ENCODE measurements at regions of chr20 and their contacts with region 1.

Region 1: DNA sequence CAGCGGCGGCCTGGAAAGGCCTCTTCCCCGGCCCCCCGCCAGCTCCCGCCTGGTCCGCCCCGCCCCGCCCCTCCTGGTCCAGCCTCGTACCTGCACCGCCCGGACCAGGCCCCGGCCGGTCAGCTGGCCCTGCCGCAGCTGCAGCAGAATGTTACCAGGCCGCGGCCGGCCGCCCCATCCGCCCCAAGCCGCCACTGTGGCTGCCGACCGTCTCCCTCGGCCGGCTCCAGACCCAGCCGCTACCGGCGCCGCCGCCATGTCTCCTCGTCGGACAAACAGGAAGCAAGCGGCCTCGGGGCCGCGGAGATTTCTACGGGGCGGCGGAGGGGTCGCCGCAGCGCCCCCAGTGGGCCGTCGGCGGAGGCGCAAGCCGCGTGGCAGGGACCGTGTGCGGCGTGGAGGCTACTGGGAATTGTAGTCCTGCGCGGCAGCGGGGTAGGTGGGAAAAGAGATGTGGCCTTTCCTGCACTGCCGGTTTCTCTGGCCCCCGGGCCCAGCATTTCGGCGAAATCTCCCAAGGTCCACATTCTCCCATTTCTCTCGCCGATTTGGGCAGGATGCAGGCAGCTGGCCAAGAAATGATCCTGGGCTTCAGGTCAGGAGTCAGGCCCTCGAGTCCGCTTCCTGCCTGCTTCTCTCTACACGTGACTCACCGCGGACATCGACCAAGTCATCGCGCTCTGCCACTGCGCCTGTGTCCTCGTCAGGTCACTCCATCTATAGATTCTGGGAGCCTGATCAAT is at the start of gene TRPC4AP:
- DNase-seq: peak; percentile 88
- ATAC-seq: peak; percentile 90
- H3K4me3 Mint-ChIP-seq: peak within 1 kb of the TSS; percentile 89
- H3K27ac Mint-ChIP-seq: peak within 1 kb of the TSS; percentile 97
- H3K4me1 Mint-ChIP-seq: peaks cover 31% of the 10 kb centered on the region
- H3K27me3 Mint-ChIP-seq: peaks cover 8% of the 10 kb centered on the region; the same call in 1 of the 2 replicates
- CTCF ChIP-seq: peak; percentile 93
- total RNA-seq, gene TRPC4AP: 62.7 to 73.8 TPM (median 68.0 TPM) in 3 replicates

Region 2: DNA sequence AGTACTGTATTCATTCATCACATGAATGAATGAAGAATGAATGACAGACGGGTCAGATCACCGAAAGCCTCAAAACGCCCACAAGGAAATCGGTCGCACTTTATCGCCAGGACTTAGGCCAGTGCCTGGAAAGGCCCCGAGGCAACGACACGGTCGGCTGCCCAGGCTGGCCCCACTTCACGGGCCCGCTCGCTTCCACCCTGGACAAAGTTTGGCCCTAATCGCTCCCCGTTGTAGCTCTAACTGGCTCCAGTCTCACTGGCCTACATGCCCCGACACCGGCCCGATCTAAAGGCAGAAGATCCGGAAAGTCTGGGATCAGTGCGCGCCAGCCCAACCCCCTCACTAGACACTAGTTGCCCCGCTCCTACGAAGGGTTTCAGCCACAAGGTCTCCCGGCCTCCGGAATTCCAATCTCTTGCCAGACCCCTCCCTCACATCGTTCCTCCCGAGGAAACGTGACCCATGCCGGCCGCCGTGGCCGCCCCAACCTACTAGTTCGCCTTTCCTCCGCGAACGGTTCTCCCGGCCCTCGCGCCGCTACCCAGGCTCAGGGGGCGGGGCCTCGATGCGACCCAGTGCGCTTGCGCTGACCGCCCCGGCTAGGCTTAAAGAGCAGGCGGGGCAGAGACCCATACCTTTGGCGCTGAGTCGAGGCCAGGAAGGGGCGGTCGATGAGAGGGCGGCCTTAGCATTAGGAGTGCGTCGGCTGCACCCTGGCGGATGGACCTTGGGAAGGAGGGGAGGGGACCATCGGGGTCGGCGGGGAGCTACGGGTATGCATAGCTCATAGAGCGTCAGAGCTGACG is 137.3 kb before region 1 on chr20 and contains the starts of genes GSS and MYH7B:
- CTCF ChIA-PET with region 1: interaction called, 10 read pairs
- POLR2A ChIA-PET with region 1: no interaction called
- DNase-seq: peak; percentile 100
- ATAC-seq: peak; percentile 98
- H3K4me3 Mint-ChIP-seq: peak within 1 kb of the TSS; percentile 91
- H3K27ac Mint-ChIP-seq: peak within 1 kb of the TSS; percentile 93
- H3K4me1 Mint-ChIP-seq: peaks cover 48% of the 10 kb centered on the region
- H3K27me3 Mint-ChIP-seq: peaks cover 8% of the 10 kb centered on the region
- CTCF ChIP-seq: no peak
- total RNA-seq, gene GSS: 40.7 to 47.3 TPM (median 46.7 TPM) in 3 replicates
- total RNA-seq, gene MYH7B: 0.66 to 1.0 TPM (median 0.98 TPM) in 3 replicates

Region 3: GRCh38 chr20:35063168-35063567 is 29.5 kb before region 1 on chr20:
- CTCF ChIA-PET with region 1: interaction called, 19 read pairs
- POLR2A ChIA-PET with region 1: no interaction called
- DNase-seq: no peak
- ATAC-seq: no peak
- H3K4me3 Mint-ChIP-seq: no peak overlapping the region
- H3K27ac Mint-ChIP-seq: no peak overlapping the region
- H3K4me1 Mint-ChIP-seq: peaks cover 23% of the 10 kb centered on the region
- H3K27me3 Mint-ChIP-seq: no peaks in the 10 kb centered on the region
- CTCF ChIP-seq: no peak

Region 4: DNA sequence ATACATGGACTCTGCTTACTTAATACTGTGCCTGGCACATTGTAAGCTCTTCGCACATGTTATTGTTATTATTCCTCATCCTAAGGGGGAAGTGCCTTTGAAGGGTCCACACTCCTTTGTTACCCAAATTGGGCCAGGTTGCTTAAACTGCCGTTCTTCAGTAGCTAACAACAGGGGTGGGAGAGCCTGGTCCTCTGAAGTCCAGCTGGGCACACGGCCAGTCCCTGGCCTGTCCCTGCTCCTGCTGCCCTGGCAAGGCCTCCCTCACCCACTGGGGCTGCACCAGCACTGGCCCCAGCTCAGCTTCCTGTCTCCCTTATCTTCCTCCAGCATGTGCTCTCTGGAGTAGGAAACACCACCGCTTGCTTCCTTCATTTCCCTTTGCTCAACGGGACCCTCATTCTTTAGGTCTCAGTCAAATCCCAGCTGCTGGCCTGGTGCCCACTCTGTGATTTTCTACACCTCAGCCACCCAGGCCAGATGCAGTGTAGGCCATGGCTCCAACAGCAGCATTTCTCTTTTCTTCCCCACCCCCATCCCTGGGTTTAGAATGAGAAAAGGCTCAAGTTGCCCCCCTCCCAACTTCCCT is 73.6 kb after region 1 on chr20:
- CTCF ChIA-PET with region 1: interaction called, 11 read pairs
- POLR2A ChIA-PET with region 1: no interaction called
- DNase-seq: no peak
- ATAC-seq: peak; percentile 80
- H3K4me3 Mint-ChIP-seq: peak overlapping the region; percentile 10
- H3K27ac Mint-ChIP-seq: peak overlapping the region; percentile 90
- H3K4me1 Mint-ChIP-seq: peaks cover 25% of the 10 kb centered on the region
- H3K27me3 Mint-ChIP-seq: no peaks in the 10 kb centered on the region; the same call in 1 of the 2 replicates
- CTCF ChIP-seq: no peak

Region 5: GRCh38 chr20:35226775-35227681 is 134.3 kb after region 1 on chr20:
- CTCF ChIA-PET with region 1: interaction called, 12 read pairs
- POLR2A ChIA-PET with region 1: no interaction called
- DNase-seq: peak; percentile 79
- ATAC-seq: peak; percentile 76
- H3K4me3 Mint-ChIP-seq: peak overlapping the region; percentile 71
- H3K27ac Mint-ChIP-seq: no peak overlapping the region
- H3K4me1 Mint-ChIP-seq: peaks cover 15% of the 10 kb centered on the region
- H3K27me3 Mint-ChIP-seq: peaks cover 28% of the 10 kb centered on the region
- CTCF ChIP-seq: no peak

Region 6: DNA sequence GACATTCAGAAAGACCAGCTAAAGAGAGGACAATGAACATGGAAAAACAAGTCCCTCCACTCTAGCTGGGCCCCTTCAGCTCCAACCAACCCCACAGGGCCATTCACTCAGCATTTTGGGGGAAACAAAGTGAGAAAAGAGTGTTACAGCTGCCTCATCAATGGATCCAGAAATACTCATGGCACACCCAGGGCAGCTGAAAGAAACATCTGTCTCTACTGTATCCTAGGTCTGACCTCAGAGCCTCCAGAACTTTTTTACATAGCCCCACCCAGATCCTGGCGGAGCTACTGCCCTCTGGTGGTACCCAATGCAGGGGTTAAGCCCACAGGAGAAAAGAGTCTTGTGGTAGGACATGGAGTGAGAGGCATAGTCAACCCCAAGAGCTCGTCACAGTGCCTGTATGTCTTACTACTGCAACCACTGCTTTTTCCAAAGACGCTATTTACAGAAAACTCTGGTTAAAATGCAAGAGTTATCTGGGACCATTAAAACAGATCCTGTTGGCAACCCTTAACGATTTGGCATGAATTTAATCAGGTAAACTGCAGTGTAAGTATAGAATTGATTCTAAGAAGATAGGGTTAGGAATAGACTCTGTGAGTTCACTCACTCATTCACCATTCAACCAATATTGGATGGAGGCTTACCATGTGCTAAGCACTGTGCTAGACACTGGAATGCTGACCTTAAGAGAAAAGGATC is 236.9 kb after region 1 on chr20:
- CTCF ChIA-PET with region 1: interaction called, 12 read pairs
- POLR2A ChIA-PET with region 1: no interaction called
- DNase-seq: peak; percentile 82
- ATAC-seq: peak; percentile 99
- H3K4me3 Mint-ChIP-seq: no peak overlapping the region
- H3K27ac Mint-ChIP-seq: 0 out of 2 replicates have a peak overlapping the region, but pooled peaks have one; percentile 40
- H3K4me1 Mint-ChIP-seq: peaks cover 11% of the 10 kb centered on the region; the same call in 1 of the 2 replicates
- H3K27me3 Mint-ChIP-seq: no peaks in the 10 kb centered on the region
- CTCF ChIP-seq: peak; percentile 58

Measured in WTC11 (cell line).